GM12878 (cell line): ENCODE measurements at regions of chr1 and their contacts with region 1.

Region 1: GRCh38 chr1:56477164-56478111 is 101.9 kb downstream of the PLPP3 start:
- DNase-seq: peak; percentile 17
- ATAC-seq: peak; percentile 75
- H3K4me3 ChIP-seq: no peak overlapping the region
- H3K27ac ChIP-seq: no peak overlapping the region
- H3K4me1 ChIP-seq: peaks cover 8% of the 10 kb centered on the region; the same call in 1 of the 2 replicates
- H3K27me3 ChIP-seq: peaks cover 0 to 5% of the 10 kb centered on the region in 2 experiments; a peak in 2 of 4 replicates
- CTCF ChIP-seq: no peak
- EP300 ChIP-seq: 0 out of 4 replicates have a peak, but pooled peaks of 1 of the 2 experiments have one; percentile 22
- POLR2A ChIP-seq: no peak
- RAD21 ChIP-seq: no peak

Region 2: DNA sequence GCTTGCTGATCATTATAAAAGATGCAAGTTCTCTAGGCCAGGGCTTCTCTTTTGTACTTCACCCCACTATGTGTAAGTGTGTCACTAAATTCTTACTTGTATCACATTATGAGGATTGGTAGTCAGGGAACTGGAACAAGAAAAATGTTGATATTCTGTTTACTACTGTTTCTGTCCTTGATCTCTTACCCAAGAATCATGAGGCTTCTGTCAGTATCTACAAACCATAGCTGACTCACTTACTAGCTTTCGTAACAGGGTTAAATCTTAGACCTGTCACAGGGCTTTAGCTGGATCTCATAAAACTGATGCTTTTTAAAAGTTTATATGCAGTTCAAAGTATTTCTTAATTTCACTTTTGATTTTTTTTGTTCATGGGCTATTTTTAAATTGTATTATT is 579.3 kb before region 1 on chr1:
- CTCF ChIA-PET with region 1: no interaction called
- POLR2A ChIA-PET with region 1: no interaction called
- RAD21 ChIA-PET with region 1: no interaction called
- SMC1A ChIA-PET with region 1: no interaction called
- in situ Hi-C with region 1: no loop called
- intact Hi-C with region 1: no loop called
- DNase-seq: no peak
- ATAC-seq: no peak
- H3K4me3 ChIP-seq: no peak overlapping the region
- H3K27ac ChIP-seq: no peak overlapping the region
- H3K4me1 ChIP-seq: no peaks in the 10 kb centered on the region
- H3K27me3 ChIP-seq: no peaks in the 10 kb centered on the region
- CTCF ChIP-seq: no peak
- EP300 ChIP-seq: no peak
- POLR2A ChIP-seq: no peak
- RAD21 ChIP-seq: no peak

Region 3: GRCh38 chr1:56387071-56387740 is 90.2 kb before region 1 on chr1:
- CTCF ChIA-PET with region 1: no interaction called
- POLR2A ChIA-PET with region 1: no interaction called
- RAD21 ChIA-PET with region 1: no interaction called
- SMC1A ChIA-PET with region 1: no interaction called
- in situ Hi-C with region 1: no loop called
- intact Hi-C with region 1: no loop called
- DNase-seq: no peak
- ATAC-seq: no peak; the same call in 2 of the 3 replicates
- H3K4me3 ChIP-seq: no peak overlapping the region
- H3K27ac ChIP-seq: no peak overlapping the region
- H3K4me1 ChIP-seq: no peaks in the 10 kb centered on the region
- H3K27me3 ChIP-seq: no peaks in the 10 kb centered on the region
- CTCF ChIP-seq: no peak
- EP300 ChIP-seq: no peak
- POLR2A ChIP-seq: no peak
- RAD21 ChIP-seq: no peak

Region 4: GRCh38 chr1:56456436-56457101 is 20.9 kb before region 1 on chr1:
- CTCF ChIA-PET with region 1: interaction called, 10 read pairs
- POLR2A ChIA-PET with region 1: no interaction called
- RAD21 ChIA-PET with region 1: interaction called, 14 read pairs
- SMC1A ChIA-PET with region 1: interaction called, 19 read pairs
- in situ Hi-C with region 1: no loop called
- intact Hi-C with region 1: no loop called
- DNase-seq: no peak
- ATAC-seq: no peak
- H3K4me3 ChIP-seq: no peak overlapping the region
- H3K27ac ChIP-seq: no peak overlapping the region
- H3K4me1 ChIP-seq: no peaks in the 10 kb centered on the region
- H3K27me3 ChIP-seq: no peaks in the 10 kb centered on the region
- CTCF ChIP-seq: no peak
- EP300 ChIP-seq: no peak
- POLR2A ChIP-seq: no peak
- RAD21 ChIP-seq: no peak

Region 5: GRCh38 chr1:56502700-56503245 is 25.3 kb after region 1 on chr1:
- CTCF ChIA-PET with region 1: interaction called, 4 read pairs
- POLR2A ChIA-PET with region 1: interaction called, 6 read pairs
- RAD21 ChIA-PET with region 1: interaction called, 3 read pairs
- SMC1A ChIA-PET with region 1: interaction called, 11 read pairs
- in situ Hi-C with region 1: no loop called
- intact Hi-C with region 1: no loop called
- DNase-seq: no peak
- ATAC-seq: no peak
- H3K4me3 ChIP-seq: no peak overlapping the region
- H3K27ac ChIP-seq: no peak overlapping the region
- H3K4me1 ChIP-seq: no peaks in the 10 kb centered on the region
- H3K27me3 ChIP-seq: no peaks in the 10 kb centered on the region
- CTCF ChIP-seq: no peak
- EP300 ChIP-seq: no peak
- POLR2A ChIP-seq: no peak
- RAD21 ChIP-seq: no peak

Region 6: GRCh38 chr1:56557746-56558145 is 80.3 kb after region 1 on chr1:
- CTCF ChIA-PET with region 1: interaction called, 3 read pairs
- POLR2A ChIA-PET with region 1: interaction called, 23 read pairs
- RAD21 ChIA-PET with region 1: interaction called, 138 read pairs
- SMC1A ChIA-PET with region 1: interaction called, 54 read pairs
- in situ Hi-C with region 1: no loop called
- intact Hi-C with region 1: no loop called
- DNase-seq: no peak
- ATAC-seq: no peak
- H3K4me3 ChIP-seq: no peak overlapping the region
- H3K27ac ChIP-seq: no peak overlapping the region
- H3K4me1 ChIP-seq: no peaks in the 10 kb centered on the region
- H3K27me3 ChIP-seq: no peaks in the 10 kb centered on the region
- CTCF ChIP-seq: no peak
- EP300 ChIP-seq: no peak
- POLR2A ChIP-seq: no peak
- RAD21 ChIP-seq: no peak

Region 7: DNA sequence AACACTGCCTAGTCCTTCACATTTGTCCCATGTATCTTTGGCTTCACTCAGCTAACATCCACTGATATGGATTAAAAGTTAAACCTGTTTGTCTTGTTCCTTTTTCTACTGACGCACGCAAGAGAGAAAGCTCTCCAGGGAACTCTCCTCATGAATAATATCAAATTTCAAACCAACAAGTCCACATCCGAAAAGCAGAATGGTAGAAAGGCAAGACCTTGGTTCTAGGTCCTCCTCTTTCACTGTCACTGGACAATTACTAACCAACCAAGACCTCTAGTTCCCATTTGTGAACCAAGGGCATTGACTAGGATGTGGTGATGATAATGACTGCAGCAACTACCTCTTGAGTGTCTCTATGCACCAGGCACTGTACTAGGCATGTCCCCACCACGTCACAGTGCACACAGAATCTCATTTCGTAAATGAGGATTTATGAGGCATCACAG is 93.5 kb after region 1 on chr1:
- CTCF ChIA-PET with region 1: interaction called, 209 read pairs
- POLR2A ChIA-PET with region 1: interaction called, 4 read pairs
- RAD21 ChIA-PET with region 1: interaction called, 266 read pairs
- SMC1A ChIA-PET with region 1: interaction called, 348 read pairs
- in situ Hi-C with region 1: no loop called
- intact Hi-C with region 1: no loop called
- DNase-seq: no peak
- ATAC-seq: peak; percentile 33
- H3K4me3 ChIP-seq: no peak overlapping the region
- H3K27ac ChIP-seq: no peak overlapping the region
- H3K4me1 ChIP-seq: no peaks in the 10 kb centered on the region
- H3K27me3 ChIP-seq: peaks cover 0 to 3% of the 10 kb centered on the region in 2 experiments; a peak in 1 of 4 replicates
- CTCF ChIP-seq: no peak
- EP300 ChIP-seq: no peak
- POLR2A ChIP-seq: no peak
- RAD21 ChIP-seq: no peak

Region 8: GRCh38 chr1:56821140-56821797 is 343.8 kb after region 1 on chr1:
- CTCF ChIA-PET with region 1: no interaction called
- POLR2A ChIA-PET with region 1: no interaction called
- RAD21 ChIA-PET with region 1: no interaction called
- SMC1A ChIA-PET with region 1: no interaction called
- in situ Hi-C with region 1: no loop called
- intact Hi-C with region 1: no loop called
- DNase-seq: no peak
- ATAC-seq: peak; percentile 82
- H3K4me3 ChIP-seq: no peak overlapping the region
- H3K27ac ChIP-seq: no peak overlapping the region
- H3K4me1 ChIP-seq: no peaks in the 10 kb centered on the region
- H3K27me3 ChIP-seq: peaks cover 0 to 1% of the 10 kb centered on the region in 2 experiments; a peak in 2 of 4 replicates
- CTCF ChIP-seq: peak; percentile 68 to 95 (median 95)
- EP300 ChIP-seq: no peak
- POLR2A ChIP-seq: no peak
- RAD21 ChIP-seq: peak; percentile 76